ENCODE measurements at regions of chr21 and their contacts with region 1.

Region 1: GRCh38 chr21:43667191-43667904 is 8.0 kb downstream of the RRP1B start:
- DNase-seq: peak; percentile 40
- H3K4me3 Mint-ChIP-seq: no peak overlapping the region
- H3K27ac Mint-ChIP-seq: peak overlapping the region; percentile 67
- H3K4me1 Mint-ChIP-seq: peaks cover 46% of the 10 kb centered on the region
- H3K27me3 Mint-ChIP-seq: no peaks in the 10 kb centered on the region

Region 2: GRCh38 chr21:42684109-42684916 is 983.0 kb before region 1 on chr21:
- CTCF ChIA-PET with region 1: no interaction called
- POLR2A ChIA-PET with region 1: no interaction called
- intact Hi-C with region 1: loop called (anchors 10 kb)
- DNase-seq: peak; percentile 77
- H3K4me3 Mint-ChIP-seq: peak overlapping the region; percentile 72
- H3K27ac Mint-ChIP-seq: peak overlapping the region; percentile 88
- H3K4me1 Mint-ChIP-seq: peaks cover 47% of the 10 kb centered on the region
- H3K27me3 Mint-ChIP-seq: peaks cover 4% of the 10 kb centered on the region

Region 3: GRCh38 chr21:43634618-43635017 is 32.7 kb before region 1 on chr21:
- CTCF ChIA-PET with region 1: no interaction called
- POLR2A ChIA-PET with region 1: no interaction called
- intact Hi-C with region 1: no loop called
- DNase-seq: no peak
- H3K4me3 Mint-ChIP-seq: no peak overlapping the region
- H3K27ac Mint-ChIP-seq: no peak overlapping the region
- H3K4me1 Mint-ChIP-seq: peaks cover 5% of the 10 kb centered on the region
- H3K27me3 Mint-ChIP-seq: no peaks in the 10 kb centered on the region

Region 4: DNA sequence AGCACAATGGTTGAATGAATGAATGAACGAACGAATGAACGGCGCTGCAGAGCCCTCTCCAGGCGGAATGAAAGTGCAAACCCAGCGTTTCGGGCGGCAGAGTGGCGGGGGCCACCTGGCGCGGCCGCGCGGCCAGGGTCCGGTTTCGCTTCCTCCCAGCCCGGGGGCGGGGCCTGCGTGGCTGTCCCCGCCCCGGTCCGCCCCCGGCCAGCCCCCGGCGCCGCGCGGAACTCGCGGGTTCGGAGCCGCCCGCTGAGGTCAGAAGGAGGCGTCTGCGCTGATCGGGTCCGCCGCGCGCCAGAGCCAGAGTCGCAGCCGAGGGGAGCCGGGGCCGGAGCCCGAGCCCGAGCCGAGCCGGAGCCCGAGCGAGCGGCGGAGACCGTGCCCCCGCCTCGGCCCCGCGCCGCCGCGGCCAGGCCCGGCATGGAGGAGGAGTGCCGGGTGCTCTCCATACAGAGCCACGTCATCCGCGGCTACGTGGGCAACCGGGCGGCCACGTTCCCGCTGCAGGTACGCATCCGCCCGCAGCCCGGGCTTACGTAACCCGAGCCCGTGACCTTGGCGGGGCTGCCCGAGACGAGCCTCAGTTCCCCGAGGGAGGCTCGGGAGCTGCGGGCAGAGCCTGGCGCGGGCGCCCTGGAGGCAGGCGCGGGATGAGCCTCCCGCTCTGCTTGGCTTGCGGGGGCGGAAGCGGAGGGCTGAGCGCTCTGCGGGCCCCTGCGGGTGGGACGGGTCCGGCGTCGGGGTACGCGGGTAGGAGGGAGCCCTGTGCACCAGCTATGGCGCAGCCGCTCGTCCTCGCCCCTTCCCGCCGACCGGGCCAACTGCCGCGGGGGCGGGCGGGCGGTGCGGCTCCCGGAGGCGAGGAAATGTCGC is 51.8 kb after region 1 on chr21 and contains the start of gene PDXK:
- CTCF ChIA-PET with region 1: no interaction called
- POLR2A ChIA-PET with region 1: no interaction called
- intact Hi-C with region 1: loop called (anchors 5 kb)
- DNase-seq: peak; percentile 83
- H3K4me3 Mint-ChIP-seq: peak within 1 kb of the TSS; percentile 86
- H3K27ac Mint-ChIP-seq: peak within 1 kb of the TSS; percentile 71
- H3K4me1 Mint-ChIP-seq: peaks cover 20% of the 10 kb centered on the region
- H3K27me3 Mint-ChIP-seq: no peaks in the 10 kb centered on the region
- total RNA-seq, gene PDXK: 126 to 131 TPM

Region 5: GRCh38 chr21:43783101-43783700 is 115.9 kb after region 1 on chr21:
- CTCF ChIA-PET with region 1: no interaction called
- POLR2A ChIA-PET with region 1: no interaction called
- intact Hi-C with region 1: loop called (anchors 5 kb)
- DNase-seq: peak; percentile 26
- H3K4me3 Mint-ChIP-seq: no peak overlapping the region
- H3K27ac Mint-ChIP-seq: peak overlapping the region; percentile 97
- H3K4me1 Mint-ChIP-seq: peaks cover 37% of the 10 kb centered on the region
- H3K27me3 Mint-ChIP-seq: no peaks in the 10 kb centered on the region

Measured in activated CD4-positive, alpha-beta memory T cell treated with anti-CD3 and anti-CD28 coated beads for 36 hours (primary cell).